Natural killer cell (primary cell): ENCODE measurements at regions of chr16 and their contacts with region 1.

Region 1: DNA sequence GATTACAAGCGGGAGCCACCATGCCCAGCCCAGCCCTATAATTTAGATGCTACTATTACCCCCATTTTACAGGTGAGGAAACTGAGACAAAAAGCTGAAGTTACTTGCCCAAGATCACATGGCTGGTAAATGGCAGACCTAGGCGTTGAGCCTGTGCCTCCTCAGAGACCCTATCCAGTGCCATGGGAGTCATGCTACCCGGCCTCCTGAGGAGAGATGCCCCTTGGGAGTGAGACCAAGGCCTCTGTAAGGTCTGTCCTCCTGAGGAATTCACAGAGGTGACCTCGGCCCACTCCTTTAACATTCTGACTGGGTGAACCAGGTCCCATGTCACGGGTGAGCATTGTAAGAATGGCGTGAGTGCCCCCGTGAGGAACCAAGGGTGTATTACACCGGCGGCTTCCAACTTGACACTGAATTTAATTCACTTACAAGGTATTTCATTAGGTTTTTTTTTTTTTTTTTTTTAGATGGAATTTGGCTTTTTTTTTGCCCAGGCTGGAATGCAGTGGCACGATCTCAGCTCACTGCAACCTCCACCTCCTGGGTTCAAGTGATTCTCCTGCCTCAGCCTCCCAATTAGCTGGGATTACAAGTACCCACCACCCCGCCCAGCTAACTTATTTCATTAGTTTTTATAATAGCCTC is 95.7 kb downstream of the ABCC6 start:
- DNase-seq: peak; percentile 54 to 80
- ATAC-seq: peak; percentile 81 to 97 (median 95)
- H3K4me3 ChIP-seq: no peak overlapping the region
- H3K4me3 Mint-ChIP-seq: no peak overlapping the region
- H3K27ac ChIP-seq: no peak overlapping the region
- H3K27ac Mint-ChIP-seq: no peak overlapping the region
- H3K4me1 ChIP-seq: peaks cover 6% of the 10 kb centered on the region
- H3K4me1 Mint-ChIP-seq: no peaks in the 10 kb centered on the region
- H3K27me3 ChIP-seq: no peaks in the 10 kb centered on the region
- H3K27me3 Mint-ChIP-seq: no peaks in the 10 kb centered on the region
- CTCF ChIP-seq: peak; percentile 88

Region 2: GRCh38 chr16:15427648-15428239 is 699.8 kb before region 1 on chr16:
- intact Hi-C with region 1: loop called (anchors 10 kb)
- DNase-seq: peak; percentile 43 to 73
- ATAC-seq: peak; percentile 60 to 70 (median 69)
- H3K4me3 ChIP-seq: no peak overlapping the region
- H3K4me3 Mint-ChIP-seq: no peak overlapping the region
- H3K27ac ChIP-seq: no peak overlapping the region
- H3K27ac Mint-ChIP-seq: no peak overlapping the region
- H3K4me1 ChIP-seq: peaks cover 3% of the 10 kb centered on the region
- H3K4me1 Mint-ChIP-seq: no peaks in the 10 kb centered on the region
- H3K27me3 ChIP-seq: no peaks in the 10 kb centered on the region
- H3K27me3 Mint-ChIP-seq: peaks cover 0 to 2% of the 10 kb centered on the region in 2 donors
- CTCF ChIP-seq: peak; percentile 59

Region 3: GRCh38 chr16:15765880-15766279 is 361.7 kb before region 1 on chr16:
- intact Hi-C with region 1: loop called (anchors 1 kb)
- DNase-seq: peak in 1 of 2 donors; percentile 64
- ATAC-seq: peak; percentile 72 to 87 (median 76)
- H3K4me3 ChIP-seq: no peak overlapping the region
- H3K4me3 Mint-ChIP-seq: no peak overlapping the region
- H3K27ac ChIP-seq: no peak overlapping the region
- H3K27ac Mint-ChIP-seq: no peak overlapping the region
- H3K4me1 ChIP-seq: no peaks in the 10 kb centered on the region
- H3K4me1 Mint-ChIP-seq: peaks cover 0 to 4% of the 10 kb centered on the region in 2 donors
- H3K27me3 ChIP-seq: no peaks in the 10 kb centered on the region
- H3K27me3 Mint-ChIP-seq: peaks cover 0 to 9% of the 10 kb centered on the region in 2 donors
- CTCF ChIP-seq: peak; percentile 32

Region 4: DNA sequence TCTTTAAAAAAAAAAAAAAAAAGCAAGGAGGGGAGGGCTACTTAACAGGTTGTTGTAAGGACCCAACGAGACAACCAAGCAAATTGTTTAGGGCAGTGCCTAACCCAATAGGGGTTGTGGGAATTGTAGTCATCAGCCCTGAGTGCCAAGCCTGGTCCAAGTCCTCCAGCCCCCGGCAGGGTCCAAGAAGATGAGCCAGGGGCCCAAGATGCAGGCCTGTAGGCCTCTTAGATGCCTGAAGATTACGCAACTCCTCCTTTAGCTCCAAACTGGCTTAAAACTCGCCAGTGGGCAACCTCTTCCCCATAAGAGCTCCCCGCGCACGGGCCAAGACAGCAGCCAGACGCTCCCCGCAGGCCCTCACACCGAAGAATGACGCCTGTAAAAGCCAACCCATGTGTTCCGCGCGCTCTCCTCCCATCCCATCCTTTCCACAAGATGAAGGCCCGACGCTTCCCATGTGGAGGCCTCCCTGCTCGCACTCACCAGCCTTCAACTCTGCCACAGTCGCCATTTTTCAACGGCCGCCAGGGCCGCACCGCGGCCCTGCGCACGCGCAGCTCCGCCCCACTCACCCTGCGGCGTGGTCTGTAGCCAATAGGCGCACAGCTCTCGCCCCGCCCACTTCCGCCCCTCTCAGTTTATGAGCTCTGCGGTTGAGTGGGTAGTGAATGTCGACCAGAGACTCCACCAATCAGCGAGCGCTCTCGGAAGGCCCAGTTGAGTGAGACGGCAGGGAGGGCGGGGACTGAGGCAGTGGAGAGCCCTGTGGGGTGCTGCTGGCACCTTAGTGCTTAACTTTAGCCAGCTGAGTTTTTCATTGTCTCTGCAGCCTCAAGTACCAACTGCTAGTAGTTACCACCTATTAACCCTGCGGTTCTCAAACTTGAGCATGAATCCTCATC is 239.3 kb before region 1 on chr16 and contains the start of gene CEP20:
- intact Hi-C with region 1: loop called (anchors 2 kb)
- DNase-seq: peak; percentile 99 to 100
- ATAC-seq: peak; percentile 97 to 100 (median 98)
- H3K4me3 ChIP-seq: peak within 1 kb of the TSS; percentile 100
- H3K4me3 Mint-ChIP-seq: peak within 1 kb of the TSS; percentile 98
- H3K27ac ChIP-seq: peak within 1 kb of the TSS; percentile 86
- H3K27ac Mint-ChIP-seq: peak within 1 kb of the TSS; percentile 90 to 96
- H3K4me1 ChIP-seq: peaks cover 20% of the 10 kb centered on the region
- H3K4me1 Mint-ChIP-seq: peaks cover 30 to 32% of the 10 kb centered on the region in 2 donors
- H3K27me3 ChIP-seq: no peaks in the 10 kb centered on the region
- H3K27me3 Mint-ChIP-seq: no peaks in the 10 kb centered on the region
- CTCF ChIP-seq: no peak
- total RNA-seq, gene CEP20: 21.4 to 23.2 (median 23.1) TPM